Caco-2 (cell line): ENCODE measurements at regions of chr4 and their contacts with region 1.

Region 1: DNA sequence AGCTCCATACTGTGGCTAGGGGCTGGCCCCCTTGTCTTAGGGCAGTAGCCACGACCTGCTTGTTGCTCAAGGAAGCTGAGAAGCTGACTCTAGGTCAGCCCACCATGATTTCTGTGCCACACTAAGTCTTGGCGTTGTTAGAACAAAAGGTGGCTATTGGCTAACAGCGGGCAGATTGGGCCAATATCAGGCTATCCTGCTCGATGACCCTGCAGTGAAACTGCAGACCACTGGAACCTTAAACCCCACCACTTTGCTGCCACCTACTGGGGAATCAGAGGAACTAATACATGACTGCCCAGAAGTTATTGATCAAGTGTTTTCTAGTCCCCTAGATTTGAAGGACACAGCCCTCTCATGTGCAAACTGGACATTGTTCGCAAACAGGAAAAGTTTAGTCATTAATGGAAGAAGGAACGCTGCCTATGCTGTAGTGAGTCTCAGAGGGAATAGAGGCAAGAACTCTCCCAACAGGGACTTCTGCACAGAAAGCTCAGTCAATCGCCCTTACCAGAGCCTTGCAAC is 17.0 kb upstream of the PAPSS1 start:
- DNase-seq: peak; percentile 59 to 70
- H3K4me3 ChIP-seq: no peak overlapping the region
- H3K4me3 Mint-ChIP-seq: no peak overlapping the region
- H3K27ac Mint-ChIP-seq: no peak overlapping the region
- H3K4me1 ChIP-seq: no peaks in the 10 kb centered on the region
- H3K4me1 Mint-ChIP-seq: peaks cover 8% of the 10 kb centered on the region
- H3K27me3 ChIP-seq: no peaks in the 10 kb centered on the region
- H3K27me3 Mint-ChIP-seq: no peaks in the 10 kb centered on the region
- CTCF ChIP-seq: peak; percentile 63 to 79

Region 2: DNA sequence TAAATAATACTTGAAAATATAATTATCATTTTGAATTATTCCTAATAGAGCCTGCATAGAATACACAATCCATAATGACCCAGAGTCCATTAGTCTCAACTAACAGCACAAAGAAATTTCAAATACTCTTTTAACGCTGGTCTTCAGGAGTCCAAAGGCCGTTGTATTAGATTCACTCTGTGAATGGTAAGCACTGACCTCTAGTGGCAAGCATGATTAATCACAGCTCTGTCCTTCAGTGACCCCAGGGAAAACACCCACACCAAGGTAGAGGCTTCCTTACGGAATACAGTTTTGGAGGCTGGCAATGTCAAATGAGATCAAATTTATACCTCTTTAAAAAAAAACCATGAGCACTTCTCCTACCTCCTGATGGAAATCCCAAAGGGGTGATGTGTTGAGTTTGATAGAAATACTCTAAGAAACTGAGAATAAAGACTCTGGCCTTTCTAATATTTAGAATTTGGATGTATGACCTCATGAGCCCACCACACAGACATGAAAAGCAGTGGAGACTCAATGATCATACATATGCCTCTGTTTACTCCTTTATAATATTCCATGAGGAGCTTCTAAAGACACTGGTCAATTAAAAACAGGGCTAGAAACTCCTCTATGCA is 553.7 kb before region 1 on chr4:
- CTCF ChIA-PET with region 1: no interaction called
- POLR2A ChIA-PET with region 1: no interaction called
- intact Hi-C with region 1: loop called (anchors 5 kb)
- DNase-seq: peak; percentile 42 to 57
- H3K4me3 ChIP-seq: no peak overlapping the region
- H3K4me3 Mint-ChIP-seq: no peak overlapping the region
- H3K27ac Mint-ChIP-seq: no peak overlapping the region
- H3K4me1 ChIP-seq: no peaks in the 10 kb centered on the region; the same call in 1 of the 2 replicates
- H3K4me1 Mint-ChIP-seq: no peaks in the 10 kb centered on the region
- H3K27me3 ChIP-seq: no peaks in the 10 kb centered on the region
- H3K27me3 Mint-ChIP-seq: no peaks in the 10 kb centered on the region
- CTCF ChIP-seq: peak; percentile 66 to 71

Region 3: DNA sequence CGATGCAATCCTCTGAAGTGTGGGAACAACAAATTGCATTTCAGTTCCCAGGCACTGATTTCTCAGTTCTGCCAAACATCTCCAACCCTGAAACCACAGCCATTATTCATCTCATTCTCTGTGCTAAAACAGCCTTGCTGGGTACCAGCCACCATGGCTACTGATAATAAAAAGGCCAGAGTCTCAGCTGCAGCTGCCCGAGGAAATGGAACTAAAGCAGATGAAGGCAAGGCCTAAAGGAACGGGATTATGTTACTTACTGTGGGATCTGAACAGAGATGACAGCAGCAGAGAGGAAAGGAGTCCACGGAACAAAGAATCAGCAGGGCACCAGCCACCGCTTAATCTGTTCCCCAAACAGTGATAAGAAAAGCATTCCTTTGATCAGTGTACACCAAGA is 172.7 kb before region 1 on chr4:
- CTCF ChIA-PET with region 1: no interaction called
- POLR2A ChIA-PET with region 1: no interaction called
- intact Hi-C with region 1: loop called (anchors 2 kb)
- DNase-seq: peak; percentile 42 to 63
- H3K4me3 ChIP-seq: no peak overlapping the region
- H3K4me3 Mint-ChIP-seq: peak overlapping the region; percentile 37
- H3K27ac Mint-ChIP-seq: peak overlapping the region; percentile 54
- H3K4me1 ChIP-seq: peaks cover 32% of the 10 kb centered on the region
- H3K4me1 Mint-ChIP-seq: peaks cover 31% of the 10 kb centered on the region
- H3K27me3 ChIP-seq: no peaks in the 10 kb centered on the region
- H3K27me3 Mint-ChIP-seq: no peaks in the 10 kb centered on the region
- CTCF ChIP-seq: no peak

Region 4: GRCh38 chr4:107654694-107655093 is 82.3 kb before region 1 on chr4:
- CTCF ChIA-PET with region 1: interaction called, 4 read pairs
- POLR2A ChIA-PET with region 1: no interaction called
- intact Hi-C with region 1: loop called (anchors 1 kb)
- DNase-seq: peak in 1 of 2 experiments; percentile 34
- H3K4me3 ChIP-seq: no peak overlapping the region
- H3K4me3 Mint-ChIP-seq: no peak overlapping the region
- H3K27ac Mint-ChIP-seq: no peak overlapping the region
- H3K4me1 ChIP-seq: no peaks in the 10 kb centered on the region
- H3K4me1 Mint-ChIP-seq: no peaks in the 10 kb centered on the region
- H3K27me3 ChIP-seq: no peaks in the 10 kb centered on the region
- H3K27me3 Mint-ChIP-seq: no peaks in the 10 kb centered on the region
- CTCF ChIP-seq: peak in 1 of 2 experiments; percentile 15

Region 5: DNA sequence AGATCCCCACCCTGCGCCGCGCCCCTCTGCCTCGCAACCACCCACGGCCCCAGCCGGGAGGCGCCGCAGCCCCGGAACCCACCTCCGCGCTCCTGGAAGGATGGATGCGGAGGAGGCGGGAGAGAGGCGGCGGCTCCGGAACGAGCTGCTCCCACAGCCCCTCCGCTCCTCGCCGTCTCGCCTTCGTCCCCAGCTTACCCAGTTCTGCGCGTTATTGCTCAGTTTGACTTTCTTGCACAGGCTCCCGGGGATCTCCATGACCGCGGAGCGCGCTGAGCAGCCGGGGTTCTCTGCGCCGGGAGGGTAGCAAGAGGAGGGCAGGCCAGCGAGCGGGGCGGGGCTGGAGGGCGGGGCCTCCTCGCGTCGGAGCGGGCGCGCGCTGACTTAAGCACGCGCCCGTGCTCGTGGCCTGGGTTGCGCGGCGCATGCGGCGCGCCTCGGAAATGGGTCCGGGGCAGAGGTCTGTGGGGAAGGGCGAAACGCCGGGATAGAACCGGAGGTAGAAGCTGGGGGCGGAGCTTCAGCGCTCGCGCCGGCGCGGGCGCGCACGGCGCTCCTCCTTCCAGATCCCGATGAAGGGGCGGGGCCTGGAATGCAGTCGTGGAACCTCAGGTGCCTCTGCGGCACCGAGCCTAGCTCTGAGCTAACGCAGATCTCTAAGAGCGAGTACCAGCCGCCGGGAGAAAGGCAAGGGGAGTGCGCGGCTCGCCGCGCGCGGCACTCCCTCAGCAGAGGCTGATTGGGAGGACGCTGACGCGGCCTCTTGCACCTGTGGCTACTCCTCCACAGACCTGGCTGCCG is 16.9 kb before region 1 on chr4 and contains the start of gene PAPSS1:
- CTCF ChIA-PET with region 1: interaction called, 4 read pairs
- POLR2A ChIA-PET with region 1: no interaction called
- intact Hi-C with region 1: loop called (anchors 1 kb)
- DNase-seq: peak; percentile 95 to 97
- H3K4me3 ChIP-seq: peak within 1 kb of the TSS; percentile 62
- H3K4me3 Mint-ChIP-seq: peak within 1 kb of the TSS; percentile 95
- H3K27ac Mint-ChIP-seq: peak within 1 kb of the TSS; percentile 87
- H3K4me1 ChIP-seq: 0 out of 2 replicates have a peak, but pooled peaks cover 5% of the 10 kb centered on the region
- H3K4me1 Mint-ChIP-seq: peaks cover 18% of the 10 kb centered on the region
- H3K27me3 ChIP-seq: no peaks in the 10 kb centered on the region
- H3K27me3 Mint-ChIP-seq: no peaks in the 10 kb centered on the region
- CTCF ChIP-seq: no peak
- total RNA-seq, gene PAPSS1: 60.1 and 66.1 TPM in 2 replicates

Region 6: GRCh38 chr4:107913281-107913899 is 176.4 kb after region 1 on chr4:
- CTCF ChIA-PET with region 1: no interaction called
- POLR2A ChIA-PET with region 1: no interaction called
- intact Hi-C with region 1: loop called (anchors 5 kb)
- DNase-seq: peak; percentile 39 to 71
- H3K4me3 ChIP-seq: no peak overlapping the region
- H3K4me3 Mint-ChIP-seq: no peak overlapping the region
- H3K27ac Mint-ChIP-seq: no peak overlapping the region
- H3K4me1 ChIP-seq: peaks cover 11% of the 10 kb centered on the region
- H3K4me1 Mint-ChIP-seq: peaks cover 6% of the 10 kb centered on the region
- H3K27me3 ChIP-seq: no peaks in the 10 kb centered on the region
- H3K27me3 Mint-ChIP-seq: no peaks in the 10 kb centered on the region
- CTCF ChIP-seq: peak; percentile 56 to 70